ENCODE measurements at regions of chr19 and their contacts with region 1.

Region 1: DNA sequence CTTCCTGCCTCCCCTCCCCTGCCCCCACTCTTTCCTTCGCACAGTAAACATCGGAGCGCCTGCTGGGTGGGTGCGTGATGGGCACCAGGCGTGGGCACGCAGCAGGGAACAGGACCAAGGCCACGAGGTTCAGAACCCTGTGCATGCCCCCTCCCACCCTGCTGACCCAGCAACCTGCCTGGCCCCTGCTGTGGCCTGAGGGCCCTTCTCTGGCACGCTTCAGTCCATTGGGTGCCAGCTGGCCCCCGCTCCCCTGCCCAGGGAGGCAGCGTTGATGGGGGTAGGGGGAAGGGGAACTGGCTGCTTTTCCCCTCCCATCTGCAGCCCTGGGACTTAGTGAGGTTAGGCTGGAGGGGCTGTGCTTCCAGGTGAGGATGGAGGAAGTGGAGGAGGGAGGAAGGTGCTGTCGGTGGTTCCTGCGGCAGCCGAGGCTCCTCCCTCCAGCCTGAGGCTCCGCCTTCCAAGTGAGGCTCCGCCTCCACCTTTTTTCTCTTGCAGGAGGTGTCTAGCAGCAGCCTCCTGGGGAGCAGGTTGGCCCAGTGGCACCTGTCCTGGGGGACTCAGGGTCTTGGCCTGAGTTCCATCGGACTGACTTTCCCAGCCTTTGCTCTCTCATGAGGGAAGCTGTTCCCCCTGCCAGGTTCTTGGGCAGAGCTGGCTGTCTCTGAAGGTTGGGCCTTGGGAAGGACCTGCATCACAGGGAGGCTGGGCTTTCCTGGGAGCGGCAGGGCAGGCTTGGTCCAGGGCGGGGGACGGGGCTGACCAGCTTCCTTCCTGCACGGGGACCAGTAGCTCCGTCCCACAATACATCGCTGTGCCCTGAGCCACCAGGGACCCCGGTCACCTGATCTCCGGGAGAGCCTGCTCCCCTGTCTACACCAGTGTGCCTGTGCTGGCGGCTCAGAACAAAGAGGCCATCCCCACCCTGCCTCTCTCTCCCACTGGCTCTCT is 7.3 kb downstream of the PIAS4 start:
- DNase-seq: peak; percentile 77
- H3K4me3 ChIP-seq: peak overlapping the region in 3 of 4 donors; percentile 6 to 35 (median 32)
- H3K27ac ChIP-seq: peak overlapping the region; percentile 68 to 86 (median 84)
- H3K4me1 ChIP-seq: peaks cover 0 to 91% (median 90%) of the 10 kb centered on the region in 4 donors
- H3K27me3 ChIP-seq: no peaks in the 10 kb centered on the region
- CTCF ChIP-seq: no peak
- EP300 ChIP-seq: no peak
- POLR2A ChIP-seq: no peak

Region 2: GRCh38 chr19:3880471-3881271 is 134.1 kb before region 1 on chr19 and contains the start of gene ATCAY:
- intact Hi-C with region 1: no loop called
- DNase-seq: no peak
- H3K4me3 ChIP-seq: no peak within 1 kb of the TSS
- H3K27ac ChIP-seq: no peak within 1 kb of the TSS
- H3K4me1 ChIP-seq: peaks cover 0 to 7% (median 0%) of the 10 kb centered on the region in 4 donors
- H3K27me3 ChIP-seq: peaks cover 20 to 71% (median 56%) of the 10 kb centered on the region in 3 donors
- CTCF ChIP-seq: no peak
- EP300 ChIP-seq: no peak
- POLR2A ChIP-seq: no peak
- total RNA-seq, gene ATCAY: 1.5 to 3.8 (median 2.2) TPM

Region 3: GRCh38 chr19:3995627-3996026 is 19.2 kb before region 1 on chr19:
- intact Hi-C with region 1: no loop called
- DNase-seq: no peak
- H3K4me3 ChIP-seq: no peak overlapping the region
- H3K27ac ChIP-seq: no peak overlapping the region
- H3K4me1 ChIP-seq: no peaks in the 10 kb centered on the region
- H3K27me3 ChIP-seq: no peaks in the 10 kb centered on the region
- CTCF ChIP-seq: no peak
- EP300 ChIP-seq: no peak
- POLR2A ChIP-seq: no peak

Region 4: GRCh38 chr19:4058034-4058692 is 43.3 kb after region 1 on chr19:
- intact Hi-C with region 1: loop called (anchors 2 kb)
- DNase-seq: peak; percentile 97
- H3K4me3 ChIP-seq: peak overlapping the region; percentile 11 to 89 (median 36)
- H3K27ac ChIP-seq: peak overlapping the region; percentile 97 to 100 (median 98)
- H3K4me1 ChIP-seq: peaks cover 0 to 76% (median 69%) of the 10 kb centered on the region in 4 donors
- H3K27me3 ChIP-seq: no peaks in the 10 kb centered on the region
- CTCF ChIP-seq: peak in 1 of 4 experiments; percentile 8
- EP300 ChIP-seq: peak in 1 of 4 donors; percentile 6
- POLR2A ChIP-seq: peak in 1 of 2 donors; percentile 31

Region 5: GRCh38 chr19:4495471-4495870 is 480.7 kb after region 1 on chr19:
- intact Hi-C with region 1: no loop called
- DNase-seq: no peak
- H3K4me3 ChIP-seq: no peak overlapping the region
- H3K27ac ChIP-seq: no peak overlapping the region
- H3K4me1 ChIP-seq: no peaks in the 10 kb centered on the region
- H3K27me3 ChIP-seq: no peaks in the 10 kb centered on the region
- CTCF ChIP-seq: no peak
- EP300 ChIP-seq: no peak
- POLR2A ChIP-seq: no peak